ENCODE measurements at regions of chr10 and their contacts with region 1.

Region 1: GRCh38 chr10:25078658-25079431 is 62.4 kb downstream of the THNSL1 start:
- DNase-seq: peak; percentile 34 to 72
- H3K4me3 ChIP-seq: no peak overlapping the region
- H3K27ac ChIP-seq: peak overlapping the region; percentile 47 to 85 (median 63)
- H3K4me1 ChIP-seq: peaks cover 0 to 28% (median 12%) of the 10 kb centered on the region in 4 donors
- H3K27me3 ChIP-seq: no peaks in the 10 kb centered on the region
- CTCF ChIP-seq: no peak
- EP300 ChIP-seq: no peak
- POLR2A ChIP-seq: no peak

Region 2: DNA sequence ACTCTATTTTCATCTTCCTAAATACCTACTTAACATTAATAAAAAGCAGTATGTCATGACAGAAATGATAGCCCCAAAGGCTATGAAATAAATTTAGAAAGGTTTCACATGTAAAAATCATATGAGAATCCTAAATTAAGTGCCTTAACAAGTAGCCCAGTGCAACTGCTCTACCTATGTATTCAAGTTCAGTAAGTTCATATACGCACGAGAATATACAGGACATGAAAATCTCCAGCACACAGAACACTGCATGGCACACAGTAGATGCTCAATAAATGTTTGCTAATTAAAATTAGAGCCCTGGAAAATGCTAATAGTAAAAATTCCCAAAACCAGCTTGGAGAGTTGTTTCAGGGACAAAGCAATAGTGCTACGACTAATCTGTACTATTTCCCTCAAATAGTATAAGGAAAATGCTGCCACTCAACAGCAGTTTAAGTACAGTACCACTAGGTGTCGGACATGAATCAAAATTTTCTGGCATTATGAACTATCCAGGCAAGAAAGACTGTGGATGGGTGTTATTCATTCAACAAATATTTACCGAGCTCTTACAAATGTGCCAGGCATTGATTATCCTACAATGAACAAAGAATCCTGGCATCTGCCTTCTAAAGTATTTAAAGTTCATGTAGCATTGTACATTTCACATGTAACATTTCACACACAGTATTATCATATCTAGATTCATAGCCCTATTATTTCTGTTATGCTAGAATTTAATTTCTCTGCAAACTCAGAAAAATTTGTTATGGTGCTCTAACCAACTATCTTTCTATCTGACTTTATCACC is 436.0 kb before region 1 on chr10:
- intact Hi-C with region 1: loop called (anchors 10 kb)
- DNase-seq: peak in 1 of 2 donors; percentile 87
- H3K4me3 ChIP-seq: no peak overlapping the region
- H3K27ac ChIP-seq: peak overlapping the region in 3 of 5 donors; percentile 1 to 43 (median 40)
- H3K4me1 ChIP-seq: peaks cover 0 to 43% (median 20%) of the 10 kb centered on the region in 4 donors
- H3K27me3 ChIP-seq: no peaks in the 10 kb centered on the region
- CTCF ChIP-seq: peak in 5 of 7 experiments; percentile 56 to 85 (median 71)
- EP300 ChIP-seq: no peak
- POLR2A ChIP-seq: no peak

Region 3: GRCh38 chr10:25026463-25026862 is 52.4 kb before region 1 on chr10:
- intact Hi-C with region 1: loop called (anchors 10 kb)
- DNase-seq: peak in 1 of 2 donors; percentile 24
- H3K4me3 ChIP-seq: no peak overlapping the region
- H3K27ac ChIP-seq: no peak overlapping the region
- H3K4me1 ChIP-seq: peaks cover 0 to 4% (median 0%) of the 10 kb centered on the region in 4 donors
- H3K27me3 ChIP-seq: no peaks in the 10 kb centered on the region
- CTCF ChIP-seq: peak in 3 of 7 experiments; percentile 4 to 42 (median 34)
- EP300 ChIP-seq: no peak
- POLR2A ChIP-seq: no peak

Measured in stomach (tissue), 19 donors.